Sciatic nerve (tissue), 2 donors: ENCODE measurements at regions of chr2 and their contacts with region 1.

Region 1: DNA sequence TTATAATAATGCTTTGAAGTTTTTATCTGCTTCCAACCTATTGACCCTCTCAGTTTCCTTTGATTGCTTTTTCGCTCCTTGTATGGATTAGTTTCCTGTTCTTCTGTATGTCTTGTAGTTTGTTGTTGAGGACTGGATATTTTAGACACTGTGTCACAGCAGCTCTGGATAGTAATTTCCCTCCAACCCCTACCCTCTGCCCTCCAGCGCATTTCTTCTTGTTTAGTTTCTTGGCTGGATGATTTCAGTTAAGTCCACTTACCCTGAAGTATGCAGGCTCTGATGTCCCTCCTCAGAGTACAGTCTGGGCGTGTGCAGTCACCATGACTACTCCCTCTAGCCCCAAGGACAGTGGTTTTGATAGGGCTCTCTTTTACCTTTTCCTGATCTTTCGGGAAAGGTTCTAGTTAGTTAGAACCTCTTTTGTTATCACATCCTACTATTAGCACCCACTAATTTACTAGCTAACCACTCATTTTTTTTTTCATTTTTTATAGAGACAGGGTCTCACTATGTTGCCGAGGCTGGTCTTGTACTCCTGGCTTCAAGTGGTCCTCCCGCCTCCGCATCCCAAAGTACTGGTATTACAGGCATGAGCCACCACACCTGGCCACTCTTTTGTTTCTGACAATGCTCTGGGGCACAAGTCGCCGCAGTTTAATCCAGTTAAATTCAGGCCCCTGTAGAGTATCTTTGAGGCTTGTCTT is 16.3 kb upstream of the LYG1 start:
- DNase-seq: no peak
- ATAC-seq: no peak

Region 2: DNA sequence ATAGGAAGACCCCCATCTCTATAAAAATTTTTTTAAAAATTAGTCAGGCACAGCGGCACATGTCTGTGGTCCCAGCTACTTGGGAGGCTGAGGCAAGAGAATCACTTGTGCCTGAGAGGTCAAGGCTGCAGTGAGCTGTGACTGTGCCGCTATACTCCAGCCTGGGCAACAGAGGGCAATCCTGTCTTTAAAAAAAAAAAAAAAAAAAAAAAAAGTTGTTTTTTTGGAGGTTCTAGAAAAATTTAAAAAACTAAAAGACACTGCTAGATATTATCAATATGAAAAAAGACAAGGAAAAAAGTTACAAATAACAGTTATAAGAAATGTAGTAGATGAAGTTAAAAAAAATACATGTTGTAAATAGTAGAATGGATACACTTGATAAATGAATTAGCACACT is 231.9 kb before region 1 on chr2:
- intact Hi-C with region 1: loop called (anchors 10 kb)
- DNase-seq: no peak
- ATAC-seq: no peak